Astrocyte of the cerebellum (primary cell): ENCODE measurements at regions of chr4 and their contacts with region 1.

Region 1: DNA sequence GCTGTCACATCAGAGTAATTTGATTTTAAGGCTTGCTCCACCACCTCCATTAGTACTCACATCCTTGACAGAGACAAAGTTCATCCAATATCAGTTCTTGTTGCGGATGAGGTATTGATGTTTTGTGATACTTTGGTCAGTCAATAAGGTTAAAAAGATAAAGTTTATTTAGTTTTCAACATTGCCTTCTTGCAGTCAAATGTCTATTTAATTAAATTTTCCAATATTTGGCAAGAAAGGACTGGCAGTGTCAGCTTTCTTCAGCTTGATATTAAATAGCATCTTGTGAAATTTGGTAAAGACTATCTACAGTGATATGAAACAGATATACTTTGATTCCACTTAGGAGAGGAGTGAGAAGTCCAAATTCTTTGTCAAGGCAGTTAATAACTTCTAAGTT is 493.4 kb downstream of the ADGRL3 start:
- DNase-seq: no peak
- H3K4me3 ChIP-seq: no peak overlapping the region
- CTCF ChIP-seq: no peak

Region 2: GRCh38 chr4:61783050-61783449 is 89.5 kb after region 1 on chr4:
- in situ Hi-C with region 1: loop called (anchors 5 kb)
- DNase-seq: no peak
- H3K4me3 ChIP-seq: no peak overlapping the region
- CTCF ChIP-seq: no peak